Dorsolateral prefrontal cortex (tissue), 120 donors: ENCODE measurements at regions of chr13 and their contacts with region 1.

Region 1: DNA sequence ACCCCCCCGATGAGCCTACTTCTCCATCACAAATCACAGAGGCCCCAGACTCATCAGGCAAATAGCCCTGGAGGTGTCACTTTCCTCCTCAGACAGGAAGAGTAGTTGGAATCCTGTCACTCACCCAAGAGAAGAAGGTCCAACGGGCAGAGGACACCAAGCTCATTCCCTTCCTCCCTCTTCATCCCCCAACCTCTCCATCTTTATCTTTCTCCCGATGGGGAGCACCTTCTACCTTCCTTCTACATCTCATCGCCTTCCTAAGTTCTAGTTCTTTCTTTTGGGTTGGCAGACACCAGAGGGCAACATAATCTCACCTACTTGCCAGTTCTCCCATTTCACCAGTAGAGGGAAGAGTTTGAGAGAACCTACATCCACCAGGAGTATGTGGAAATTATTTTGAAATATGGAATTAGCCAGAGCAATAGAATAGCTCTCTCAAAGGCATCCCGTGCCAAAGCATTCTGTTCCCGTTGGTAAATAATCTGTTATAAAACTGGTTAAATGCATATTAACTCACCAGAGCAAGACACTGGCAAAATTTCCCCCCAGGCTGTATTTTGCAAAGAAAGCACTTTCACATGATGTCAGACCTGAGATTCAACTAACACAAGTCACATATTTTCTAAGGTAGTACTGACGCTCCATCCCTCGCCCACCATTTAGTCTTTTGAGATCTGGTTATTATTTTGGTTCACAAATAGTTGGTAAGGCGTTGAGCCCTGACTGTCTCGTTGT is 55.0 kb downstream of the ZIC5 start:
- DNase-seq: no peak
- H3K4me3 ChIP-seq: no peak overlapping the region
- H3K27ac ChIP-seq: no peak overlapping the region
- H3K27me3 ChIP-seq: peaks cover 0 to 11% (median 0%) of the 10 kb centered on the region in 45 donors
- CTCF ChIP-seq: peak; percentile 47 to 93 (median 87)

Region 2: DNA sequence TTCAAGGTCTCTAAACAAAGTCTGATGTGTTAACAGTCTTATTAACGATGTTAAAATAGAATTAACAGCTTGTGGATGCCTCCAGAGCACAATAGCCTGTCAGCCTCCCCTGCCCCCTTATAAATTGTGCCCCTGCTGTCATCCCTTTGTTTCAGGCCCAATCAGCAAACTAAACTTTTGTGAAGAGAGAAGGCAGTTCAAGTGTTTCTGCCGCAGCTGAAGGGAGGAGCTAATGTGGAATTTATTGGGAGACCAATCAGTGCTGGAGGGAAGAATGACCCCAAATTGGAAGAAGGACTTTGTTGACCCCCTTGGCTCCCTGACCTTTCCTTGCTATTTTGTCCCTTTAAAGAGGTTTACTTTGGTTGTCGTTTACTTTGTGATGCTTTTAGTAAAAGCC is 254.7 kb before region 1 on chr13:
- intact Hi-C with region 1: loop called in 1 of 2 experiments (anchors 2 kb)
- DNase-seq: no peak
- H3K4me3 ChIP-seq: no peak overlapping the region
- H3K27ac ChIP-seq: peak overlapping the region in 13 of 59 donors; percentile 4 to 98 (median 22)
- H3K27me3 ChIP-seq: no peaks in the 10 kb centered on the region
- CTCF ChIP-seq: no peak

Region 3: DNA sequence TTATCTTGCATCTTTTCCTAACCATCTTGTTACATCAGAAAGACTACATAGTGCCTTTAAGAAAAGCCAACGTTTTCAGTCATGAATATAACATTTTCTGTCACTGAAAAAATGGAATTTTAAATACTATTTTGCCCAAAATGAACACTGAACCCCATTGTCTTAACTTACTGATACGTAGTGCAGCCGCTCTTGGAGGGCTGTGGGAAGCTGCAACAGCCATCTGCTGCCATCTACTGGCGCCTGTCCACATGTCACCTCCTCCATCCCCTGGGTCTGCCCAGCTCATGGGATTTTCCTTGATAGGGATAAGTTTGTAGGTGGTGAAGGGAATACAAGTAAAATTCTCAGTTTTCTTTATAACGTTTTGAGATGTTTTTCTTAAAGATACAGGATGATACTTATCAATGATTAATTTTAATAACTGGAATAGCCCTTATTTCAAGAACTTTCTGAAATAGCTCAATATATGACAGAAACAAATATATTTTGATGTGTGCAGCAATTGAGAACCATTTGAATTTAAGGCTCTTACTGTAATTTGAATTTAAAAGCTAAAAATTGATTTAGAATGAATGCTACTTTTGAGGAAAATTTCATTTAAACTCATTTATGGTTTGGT is 598.4 kb after region 1 on chr13:
- intact Hi-C with region 1: loop called (anchors 5 to 10 kb)
- DNase-seq: peak; percentile 78 to 92 (median 87)
- H3K4me3 ChIP-seq: peak overlapping the region in 28 of 59 donors; percentile 2 to 51 (median 24)
- H3K27ac ChIP-seq: peak overlapping the region in 42 of 59 donors; percentile 1 to 86 (median 62)
- H3K27me3 ChIP-seq: no peaks in the 10 kb centered on the region
- CTCF ChIP-seq: peak; percentile 43 to 96 (median 90)